ENCODE measurements at regions of chr3 and their contacts with region 1.

Region 1: DNA sequence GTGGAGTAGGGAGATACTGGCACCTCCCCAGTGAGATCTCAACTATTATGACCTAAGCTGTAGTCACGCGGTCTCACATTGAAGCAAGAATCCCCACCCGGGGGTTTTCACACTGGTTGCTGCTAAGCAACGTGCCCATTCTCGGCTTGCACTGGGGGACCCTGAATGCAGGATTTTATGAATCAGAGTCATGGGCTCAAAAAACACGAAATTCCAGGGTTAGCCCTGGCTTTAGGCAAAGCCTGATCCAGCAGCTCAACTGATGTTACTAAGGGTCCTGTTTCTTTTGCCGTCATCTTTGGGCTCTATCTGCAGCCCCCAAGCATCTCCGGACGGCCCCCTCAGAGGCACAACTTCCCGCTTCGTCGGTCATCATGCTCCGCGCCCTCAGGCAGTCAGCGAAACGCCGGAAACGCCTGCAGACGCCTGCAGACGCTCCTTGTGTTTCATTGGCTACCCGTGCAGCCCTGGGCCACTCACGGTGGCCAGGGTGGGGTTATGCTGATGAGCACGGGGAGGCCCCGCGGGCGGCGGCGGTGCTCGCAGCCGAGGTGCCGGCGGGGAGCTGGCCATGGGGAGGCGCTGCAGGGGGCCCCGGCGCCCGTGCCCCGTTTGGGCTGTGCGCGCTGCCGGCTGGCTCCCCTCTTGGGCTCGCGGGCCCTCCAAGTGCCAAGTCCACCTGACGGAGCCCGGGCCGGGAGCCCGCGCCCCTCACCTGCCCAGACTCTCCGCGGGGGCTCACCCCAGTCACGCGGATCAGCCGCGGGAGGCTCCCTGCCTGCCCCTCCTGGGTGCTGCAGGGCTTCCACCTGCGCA is 25.8 kb downstream of the EFCC1 start:
- DNase-seq: peak; percentile 93 to 96 (median 94)
- ATAC-seq: peak; percentile 100
- H3K4me3 ChIP-seq: peak overlapping the region; percentile 58
- H3K27ac ChIP-seq: peak overlapping the region; percentile 30; the same call in 1 of the 3 replicates
- H3K4me1 ChIP-seq: peaks cover 10 to 25% of the 10 kb centered on the region in 2 experiments; a peak in 4 of 5 replicates
- H3K27me3 ChIP-seq: no peaks in the 10 kb centered on the region
- CTCF ChIP-seq: peak; percentile 69 to 79 (median 74)
- EP300 ChIP-seq: no peak
- POLR2A ChIP-seq: peak; percentile 69
- RAD21 ChIP-seq: peak; percentile 32 to 50

Region 2: DNA sequence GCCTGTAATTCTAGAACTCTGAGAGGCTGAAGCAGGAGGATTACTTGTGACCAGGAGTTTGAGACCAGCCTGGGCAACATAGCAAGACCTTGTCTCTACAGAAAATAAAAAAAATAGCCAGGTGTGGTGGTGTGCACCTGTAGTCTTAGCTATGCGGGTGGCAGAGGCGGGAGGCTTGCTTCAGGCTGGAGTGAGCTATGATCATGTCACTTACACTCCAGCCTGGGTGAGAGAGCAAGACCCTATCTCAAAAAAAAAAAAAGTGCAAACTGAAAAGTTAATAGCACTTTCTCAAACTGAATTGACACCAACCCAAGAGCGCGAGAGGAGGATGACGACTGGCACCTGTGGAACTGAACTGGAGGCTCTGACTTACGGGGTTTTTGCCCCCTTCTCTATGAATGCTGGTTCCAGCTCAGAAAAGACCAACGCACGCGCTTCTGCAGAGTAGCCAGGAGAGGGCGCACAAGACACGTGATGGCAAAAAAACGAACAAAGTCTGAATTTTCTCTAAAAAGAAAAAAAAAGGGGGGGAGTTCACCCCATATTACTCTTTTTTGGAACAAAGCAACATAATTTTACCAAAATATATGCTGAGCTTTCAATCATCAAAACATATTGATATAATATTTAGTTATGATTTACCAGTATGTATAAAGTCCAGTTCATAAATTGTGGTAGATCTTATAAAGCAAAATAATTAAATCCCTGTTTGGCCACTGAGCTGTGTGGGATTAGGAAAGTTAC is 56.8 kb before region 1 on chr3:
- CTCF ChIA-PET with region 1: no interaction called
- POLR2A ChIA-PET with region 1: interaction called, 3 read pairs
- in situ Hi-C with region 1: no loop called
- intact Hi-C with region 1: loop called (anchors 5 kb)
- DNase-seq: peak; percentile 35 to 59 (median 48)
- ATAC-seq: peak; percentile 79
- H3K4me3 ChIP-seq: no peak overlapping the region
- H3K27ac ChIP-seq: no peak overlapping the region
- H3K4me1 ChIP-seq: no peaks in the 10 kb centered on the region; a peak in 2 of 5 replicates
- H3K27me3 ChIP-seq: peaks cover 0 to 19% of the 10 kb centered on the region in 2 experiments; a peak in 2 of 5 replicates
- CTCF ChIP-seq: peak; percentile 74 to 83 (median 82)
- EP300 ChIP-seq: no peak
- POLR2A ChIP-seq: no peak
- RAD21 ChIP-seq: peak; percentile 73 to 80

Region 3: GRCh38 chr3:129016356-129016719 is 10.6 kb before region 1 on chr3:
- CTCF ChIA-PET with region 1: no interaction called
- POLR2A ChIA-PET with region 1: interaction called, 22 read pairs
- in situ Hi-C with region 1: no loop called
- intact Hi-C with region 1: no loop called
- DNase-seq: no peak
- ATAC-seq: no peak
- H3K4me3 ChIP-seq: no peak overlapping the region
- H3K27ac ChIP-seq: peak overlapping the region; percentile 62
- H3K4me1 ChIP-seq: peaks cover 24 to 36% of the 10 kb centered on the region in 2 experiments
- H3K27me3 ChIP-seq: no peaks in the 10 kb centered on the region
- CTCF ChIP-seq: no peak; a peak in 1 of 6 replicates
- EP300 ChIP-seq: no peak
- POLR2A ChIP-seq: no peak
- RAD21 ChIP-seq: no peak

Region 4: GRCh38 chr3:129087138-129087702 is 60.3 kb after region 1 on chr3:
- CTCF ChIA-PET with region 1: no interaction called
- POLR2A ChIA-PET with region 1: no interaction called
- in situ Hi-C with region 1: no loop called
- intact Hi-C with region 1: loop called (anchors 10 kb)
- DNase-seq: no peak
- ATAC-seq: no peak
- H3K4me3 ChIP-seq: no peak overlapping the region
- H3K27ac ChIP-seq: no peak overlapping the region
- H3K4me1 ChIP-seq: peaks cover 0 to 10% of the 10 kb centered on the region in 2 experiments; a peak in 3 of 5 replicates
- H3K27me3 ChIP-seq: no peaks in the 10 kb centered on the region
- CTCF ChIP-seq: no peak
- EP300 ChIP-seq: no peak
- POLR2A ChIP-seq: no peak
- RAD21 ChIP-seq: no peak

Measured in K562 (cell line).